ENCODE measurements at regions of chr3 and their contacts with region 1.

Region 1: GRCh38 chr3:169558371-169558770 is 105.1 kb downstream of the MECOM start:
- DNase-seq: no peak
- H3K4me3 ChIP-seq: no peak overlapping the region
- H3K27ac ChIP-seq: peak overlapping the region; percentile 6 to 76
- H3K4me1 ChIP-seq: peaks cover 4 to 24% of the 10 kb centered on the region in 2 donors
- H3K27me3 ChIP-seq: no peaks in the 10 kb centered on the region
- CTCF ChIP-seq: no peak

Region 2: DNA sequence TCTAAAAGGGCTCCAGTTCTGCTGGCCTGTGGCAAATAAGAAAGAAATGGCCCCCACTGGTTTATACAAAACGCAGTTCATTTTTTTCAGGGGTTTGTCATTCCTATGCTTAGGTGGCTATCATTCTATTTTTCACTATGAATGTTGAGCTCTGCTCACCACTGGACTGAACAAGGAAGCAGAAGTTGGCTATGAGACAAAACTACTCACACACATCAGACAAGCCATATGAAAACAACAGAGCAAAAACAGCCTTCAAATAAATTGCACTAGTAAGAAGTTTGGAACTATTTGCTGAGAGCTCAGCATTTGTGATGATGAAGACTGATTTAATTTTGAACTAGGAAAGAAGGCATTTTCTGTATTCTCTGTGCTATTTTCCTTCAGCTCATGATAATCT is 223.4 kb before region 1 on chr3:
- intact Hi-C with region 1: no loop called
- DNase-seq: no peak
- H3K4me3 ChIP-seq: no peak overlapping the region
- H3K27ac ChIP-seq: peak overlapping the region; percentile 23 to 42
- H3K4me1 ChIP-seq: peaks cover 2 to 10% of the 10 kb centered on the region in 2 donors
- H3K27me3 ChIP-seq: no peaks in the 10 kb centered on the region
- CTCF ChIP-seq: no peak

Region 3: GRCh38 chr3:169522600-169523529 is 35.5 kb before region 1 on chr3:
- intact Hi-C with region 1: loop called (anchors 2 kb)
- DNase-seq: no peak
- H3K4me3 ChIP-seq: no peak overlapping the region
- H3K27ac ChIP-seq: no peak overlapping the region
- H3K4me1 ChIP-seq: peaks cover 0 to 14% of the 10 kb centered on the region in 2 donors
- H3K27me3 ChIP-seq: no peaks in the 10 kb centered on the region
- CTCF ChIP-seq: no peak

Measured in ascending aorta (tissue), 2 donors.